B cell (primary cell): ENCODE measurements at regions of chr3 and their contacts with region 1.

Region 1: GRCh38 chr3:186540221-186540834 is 3.9 kb downstream of the CRYGS start:
- DNase-seq: peak; percentile 89
- ATAC-seq: peak; percentile 84
- H3K4me3 ChIP-seq: peak overlapping the region in 1 of 5 experiments; percentile 23
- H3K4me3 Mint-ChIP-seq: no peak overlapping the region
- H3K27ac ChIP-seq: no peak overlapping the region
- H3K27ac Mint-ChIP-seq: no peak overlapping the region
- H3K4me1 ChIP-seq: peaks cover 8 to 19% of the 10 kb centered on the region in 2 donors
- H3K4me1 Mint-ChIP-seq: peaks cover 25% of the 10 kb centered on the region
- H3K27me3 ChIP-seq: peaks cover 0 to 11% (median 5%) of the 10 kb centered on the region in 4 experiments
- H3K27me3 Mint-ChIP-seq: no peaks in the 10 kb centered on the region
- CTCF ChIP-seq: peak; percentile 82

Region 2: DNA sequence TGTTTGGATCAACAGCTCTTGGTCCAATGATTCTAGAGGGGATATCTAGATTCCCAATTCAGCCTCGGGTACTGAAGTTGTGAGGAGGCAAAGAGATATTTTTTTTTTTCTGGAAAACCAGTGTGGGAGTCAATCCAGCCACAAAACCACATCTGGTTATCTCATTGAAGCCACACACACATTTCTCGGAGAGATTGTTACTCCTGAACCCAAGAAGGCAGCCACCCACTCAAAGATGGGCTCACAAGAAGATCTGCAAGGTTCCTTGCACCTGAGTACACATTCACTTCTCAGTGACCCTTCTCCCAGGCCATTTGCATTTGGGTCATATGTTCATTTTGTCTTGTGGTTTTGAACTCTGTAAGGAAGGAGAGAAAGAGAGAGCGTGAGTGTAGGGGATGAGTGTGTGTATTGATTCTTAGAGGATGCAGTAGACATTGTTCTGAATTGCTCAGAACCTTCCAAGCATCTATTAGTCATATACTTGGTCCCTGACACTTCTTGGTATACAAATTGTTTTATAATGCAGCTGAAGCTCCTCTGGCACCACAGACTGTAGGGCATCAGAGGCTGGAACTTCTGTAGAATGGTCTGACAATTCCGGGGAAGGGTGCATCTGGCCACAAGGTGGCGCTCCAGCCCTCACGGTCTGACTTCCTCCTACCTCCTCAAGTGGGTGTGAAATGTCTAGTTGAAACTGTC is 563.2 kb before region 1 on chr3:
- CTCF ChIA-PET with region 1: interaction called, 203 read pairs
- POLR2A ChIA-PET with region 1: no interaction called
- intact Hi-C with region 1: loop called (anchors 1 kb)
- DNase-seq: peak; percentile 84
- ATAC-seq: peak; percentile 88
- H3K4me3 ChIP-seq: no peak overlapping the region
- H3K4me3 Mint-ChIP-seq: no peak overlapping the region
- H3K27ac ChIP-seq: no peak overlapping the region
- H3K27ac Mint-ChIP-seq: peak overlapping the region; percentile 11
- H3K4me1 ChIP-seq: peaks cover 0 to 2% of the 10 kb centered on the region in 2 donors
- H3K4me1 Mint-ChIP-seq: peaks cover 7% of the 10 kb centered on the region
- H3K27me3 ChIP-seq: no peaks in the 10 kb centered on the region
- H3K27me3 Mint-ChIP-seq: no peaks in the 10 kb centered on the region
- CTCF ChIP-seq: peak; percentile 93

Region 3: DNA sequence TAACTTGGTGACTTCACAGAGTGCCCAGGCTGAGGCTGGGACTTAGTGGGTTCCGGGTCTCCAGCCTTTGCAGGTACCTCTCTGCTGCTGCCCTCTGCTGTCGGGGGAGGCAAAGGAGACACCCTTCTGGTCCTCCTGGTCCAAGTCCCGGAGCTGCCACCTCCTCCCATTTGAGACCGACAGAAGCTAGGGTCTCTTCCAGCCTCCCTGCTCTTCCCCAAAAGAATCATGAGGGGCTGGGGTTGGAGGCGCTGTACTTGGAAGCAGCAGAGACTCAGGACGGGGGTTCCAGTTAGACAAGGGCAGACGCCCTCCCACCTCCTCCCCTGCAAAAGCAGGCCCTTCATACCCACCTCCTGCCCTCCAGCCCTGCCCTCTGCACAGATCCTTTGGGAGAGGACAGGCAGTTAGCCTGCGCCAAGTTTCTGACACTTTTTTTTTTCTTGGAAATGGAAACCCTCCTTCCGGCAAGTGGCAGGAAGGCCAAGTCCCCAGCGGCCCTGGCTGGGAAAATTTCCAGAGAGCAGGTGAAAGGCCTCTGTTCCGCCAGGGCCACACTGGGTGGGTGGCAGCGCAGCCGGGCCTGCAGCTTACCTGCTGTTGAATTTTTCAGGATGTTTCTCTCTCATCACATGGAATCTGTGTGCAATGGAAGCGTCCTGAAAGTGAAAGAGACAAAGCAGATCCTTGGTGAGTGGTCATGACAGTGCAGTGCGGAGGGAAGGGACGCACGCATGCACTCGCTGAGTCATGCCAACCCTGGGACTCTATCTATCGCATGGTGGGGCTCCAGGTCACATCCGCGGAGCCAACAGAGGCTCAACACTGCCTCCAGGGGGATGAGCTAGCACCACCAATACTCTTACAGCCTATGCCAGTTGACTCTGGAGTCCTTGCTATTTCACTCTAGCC is 298.2 kb before region 1 on chr3:
- CTCF ChIA-PET with region 1: interaction called, 15 read pairs
- POLR2A ChIA-PET with region 1: interaction called, 3 read pairs
- intact Hi-C with region 1: no loop called
- DNase-seq: peak; percentile 70
- ATAC-seq: peak; percentile 69
- H3K4me3 ChIP-seq: no peak overlapping the region
- H3K4me3 Mint-ChIP-seq: no peak overlapping the region
- H3K27ac ChIP-seq: no peak overlapping the region
- H3K27ac Mint-ChIP-seq: no peak overlapping the region
- H3K4me1 ChIP-seq: peaks cover 0 to 14% of the 10 kb centered on the region in 2 donors
- H3K4me1 Mint-ChIP-seq: peaks cover 11% of the 10 kb centered on the region
- H3K27me3 ChIP-seq: no peaks in the 10 kb centered on the region
- H3K27me3 Mint-ChIP-seq: no peaks in the 10 kb centered on the region
- CTCF ChIP-seq: peak; percentile 53

Region 4: DNA sequence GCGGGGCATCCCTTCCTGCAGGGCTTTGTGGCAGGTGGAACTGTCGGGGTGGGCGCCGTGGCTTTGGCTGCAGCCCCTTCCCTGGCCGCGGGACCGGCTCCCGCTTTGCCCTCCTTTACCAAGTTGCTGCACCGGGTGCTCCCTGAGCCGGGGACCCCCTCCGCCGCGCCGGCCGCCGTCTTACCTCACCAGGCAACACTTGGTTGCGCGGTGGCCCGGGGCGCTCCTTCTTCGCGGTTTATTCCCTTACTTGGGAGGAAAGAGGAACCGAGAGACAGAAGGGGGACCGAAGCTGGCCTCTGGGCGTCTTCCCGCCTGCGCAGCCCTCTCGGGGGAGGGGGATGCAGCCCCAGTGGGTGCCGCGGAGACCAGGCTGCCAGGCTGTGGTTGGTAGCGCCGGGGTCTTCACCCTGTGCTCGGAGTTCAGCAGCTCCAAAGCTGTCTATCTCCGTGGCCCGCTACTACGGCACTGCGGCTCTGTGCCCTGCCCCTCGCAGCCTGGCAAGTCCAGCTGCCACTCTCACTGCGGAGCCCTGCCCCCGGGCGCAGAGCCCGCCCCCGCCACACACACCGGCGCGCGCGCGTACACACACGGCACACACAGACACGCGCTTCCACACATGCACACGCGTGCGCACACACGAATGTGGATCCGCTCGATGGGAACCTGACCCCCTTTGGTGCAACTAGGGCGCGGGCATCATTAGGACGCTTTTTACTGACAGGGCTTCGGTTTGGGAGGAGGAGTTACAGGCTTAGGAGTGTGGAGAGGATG is 178.4 kb before region 1 on chr3 and contains the start of gene DGKG:
- CTCF ChIA-PET with region 1: interaction called, 5 read pairs
- POLR2A ChIA-PET with region 1: interaction called, 3 read pairs
- intact Hi-C with region 1: loop called (anchors 1 kb)
- DNase-seq: peak; percentile 76
- ATAC-seq: peak; percentile 81
- H3K4me3 ChIP-seq: peak within 1 kb of the TSS; percentile 52 to 65 (median 58)
- H3K4me3 Mint-ChIP-seq: peak within 1 kb of the TSS; percentile 87
- H3K27ac ChIP-seq: peak within 1 kb of the TSS in 1 of 2 donors; percentile 9
- H3K27ac Mint-ChIP-seq: peak within 1 kb of the TSS; percentile 67
- H3K4me1 ChIP-seq: peaks cover 19 to 22% of the 10 kb centered on the region in 2 donors
- H3K4me1 Mint-ChIP-seq: peaks cover 24% of the 10 kb centered on the region
- H3K27me3 ChIP-seq: peaks cover 0 to 34% (median 11%) of the 10 kb centered on the region in 4 experiments
- H3K27me3 Mint-ChIP-seq: peaks cover 7% of the 10 kb centered on the region
- CTCF ChIP-seq: no peak
- total RNA-seq, gene DGKG: 10.9 and 11.6 TPM in 2 replicates

Region 5: GRCh38 chr3:186506857-186507256 is 33.5 kb before region 1 on chr3:
- CTCF ChIA-PET with region 1: interaction called, 15 read pairs
- POLR2A ChIA-PET with region 1: interaction called, 3 read pairs
- intact Hi-C with region 1: no loop called
- DNase-seq: no peak
- ATAC-seq: no peak
- H3K4me3 ChIP-seq: no peak overlapping the region
- H3K4me3 Mint-ChIP-seq: no peak overlapping the region
- H3K27ac ChIP-seq: no peak overlapping the region
- H3K27ac Mint-ChIP-seq: no peak overlapping the region
- H3K4me1 ChIP-seq: peaks cover 0 to 6% of the 10 kb centered on the region in 2 donors
- H3K4me1 Mint-ChIP-seq: peaks cover 23% of the 10 kb centered on the region
- H3K27me3 ChIP-seq: peaks cover 0 to 12% (median 2%) of the 10 kb centered on the region in 4 experiments
- H3K27me3 Mint-ChIP-seq: peaks cover 14% of the 10 kb centered on the region
- CTCF ChIP-seq: no peak

Region 6: DNA sequence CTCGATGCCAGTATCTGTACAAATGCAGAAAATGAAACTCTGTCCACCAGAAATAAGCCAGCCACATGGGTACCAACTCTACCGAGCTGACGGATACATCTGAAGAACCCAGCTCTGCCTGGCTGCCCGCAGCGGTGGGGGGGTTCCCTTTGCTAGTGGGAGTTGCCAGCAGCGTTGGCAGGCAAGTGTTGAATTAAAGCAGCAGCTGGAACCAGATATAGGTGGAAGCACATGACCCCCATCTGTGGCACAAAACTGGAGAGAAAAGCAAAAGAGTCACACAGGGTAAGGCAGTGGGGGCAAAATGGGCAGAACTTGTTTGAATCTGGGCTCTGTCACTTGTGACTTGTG is 14.1 kb before region 1 on chr3:
- CTCF ChIA-PET with region 1: interaction called, 56 read pairs
- POLR2A ChIA-PET with region 1: interaction called, 3 read pairs
- intact Hi-C with region 1: no loop called
- DNase-seq: peak; percentile 84
- ATAC-seq: peak; percentile 71
- H3K4me3 ChIP-seq: peak overlapping the region in 1 of 5 experiments; percentile 15
- H3K4me3 Mint-ChIP-seq: peak overlapping the region; percentile 42
- H3K27ac ChIP-seq: peak overlapping the region; percentile 74 to 79
- H3K27ac Mint-ChIP-seq: peak overlapping the region; percentile 90
- H3K4me1 ChIP-seq: peaks cover 58 to 65% of the 10 kb centered on the region in 2 donors
- H3K4me1 Mint-ChIP-seq: peaks cover 79% of the 10 kb centered on the region
- H3K27me3 ChIP-seq: peaks cover 0 to 4% (median 1%) of the 10 kb centered on the region in 4 experiments
- H3K27me3 Mint-ChIP-seq: peaks cover 3% of the 10 kb centered on the region
- CTCF ChIP-seq: no peak